ENCODE measurements at regions of chr18 and their contacts with region 1.

Region 1: DNA sequence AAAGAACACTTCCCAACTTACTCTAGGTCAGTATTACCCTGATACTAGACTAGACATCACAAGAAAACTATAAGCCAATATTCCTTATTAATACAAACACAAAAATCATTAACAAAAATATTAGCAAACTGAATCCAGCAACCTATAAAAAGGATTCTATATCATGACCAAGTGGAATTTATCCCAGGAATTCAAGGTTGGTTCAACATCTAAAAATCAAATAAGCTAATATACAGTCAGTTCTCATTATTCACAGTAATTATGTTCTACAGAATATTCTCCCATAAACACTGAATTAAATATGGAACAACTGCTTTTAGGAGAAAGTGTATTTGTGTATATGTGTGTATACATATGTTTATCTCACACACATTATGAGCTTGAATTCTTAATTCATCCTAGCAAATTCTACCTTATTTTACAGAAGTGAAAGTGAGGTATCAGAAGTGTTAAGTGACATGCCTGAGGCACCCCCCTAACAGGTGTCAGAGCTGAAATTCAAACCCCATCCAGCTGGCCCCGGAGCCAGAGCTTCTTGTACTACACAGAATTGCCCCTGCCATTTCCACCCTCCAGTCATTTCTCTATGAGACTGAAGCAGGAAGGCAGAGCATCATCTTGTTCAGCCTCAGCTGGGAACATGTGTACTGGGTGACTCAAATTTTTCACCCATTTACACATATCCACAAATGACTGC is 77.8 kb downstream of the MALT1 start:
- DNase-seq: no peak
- H3K4me3 Mint-ChIP-seq: no peak overlapping the region
- H3K27ac Mint-ChIP-seq: no peak overlapping the region
- H3K4me1 Mint-ChIP-seq: no peaks in the 10 kb centered on the region
- H3K27me3 Mint-ChIP-seq: no peaks in the 10 kb centered on the region
- CTCF ChIP-seq: no peak

Region 2: GRCh38 chr18:58529714-58530354 is 219.2 kb before region 1 on chr18:
- CTCF ChIA-PET with region 1: interaction called, 14 read pairs
- POLR2A ChIA-PET with region 1: interaction called, 4 read pairs
- intact Hi-C with region 1: no loop called
- DNase-seq: peak; percentile 70
- H3K4me3 Mint-ChIP-seq: no peak overlapping the region
- H3K27ac Mint-ChIP-seq: no peak overlapping the region
- H3K4me1 Mint-ChIP-seq: no peaks in the 10 kb centered on the region
- H3K27me3 Mint-ChIP-seq: no peaks in the 10 kb centered on the region
- CTCF ChIP-seq: peak; percentile 91